ENCODE measurements at regions of chr17 and their contacts with region 1.

Region 1: GRCh38 chr17:38898812-38899348 is 26.5 kb upstream of the LASP1NB start:
- DNase-seq: no peak
- H3K4me3 ChIP-seq: no peak overlapping the region
- H3K27ac ChIP-seq: no peak overlapping the region
- H3K4me1 ChIP-seq: peaks cover 26% of the 10 kb centered on the region
- H3K27me3 ChIP-seq: no peaks in the 10 kb centered on the region
- CTCF ChIP-seq: no peak

Region 2: DNA sequence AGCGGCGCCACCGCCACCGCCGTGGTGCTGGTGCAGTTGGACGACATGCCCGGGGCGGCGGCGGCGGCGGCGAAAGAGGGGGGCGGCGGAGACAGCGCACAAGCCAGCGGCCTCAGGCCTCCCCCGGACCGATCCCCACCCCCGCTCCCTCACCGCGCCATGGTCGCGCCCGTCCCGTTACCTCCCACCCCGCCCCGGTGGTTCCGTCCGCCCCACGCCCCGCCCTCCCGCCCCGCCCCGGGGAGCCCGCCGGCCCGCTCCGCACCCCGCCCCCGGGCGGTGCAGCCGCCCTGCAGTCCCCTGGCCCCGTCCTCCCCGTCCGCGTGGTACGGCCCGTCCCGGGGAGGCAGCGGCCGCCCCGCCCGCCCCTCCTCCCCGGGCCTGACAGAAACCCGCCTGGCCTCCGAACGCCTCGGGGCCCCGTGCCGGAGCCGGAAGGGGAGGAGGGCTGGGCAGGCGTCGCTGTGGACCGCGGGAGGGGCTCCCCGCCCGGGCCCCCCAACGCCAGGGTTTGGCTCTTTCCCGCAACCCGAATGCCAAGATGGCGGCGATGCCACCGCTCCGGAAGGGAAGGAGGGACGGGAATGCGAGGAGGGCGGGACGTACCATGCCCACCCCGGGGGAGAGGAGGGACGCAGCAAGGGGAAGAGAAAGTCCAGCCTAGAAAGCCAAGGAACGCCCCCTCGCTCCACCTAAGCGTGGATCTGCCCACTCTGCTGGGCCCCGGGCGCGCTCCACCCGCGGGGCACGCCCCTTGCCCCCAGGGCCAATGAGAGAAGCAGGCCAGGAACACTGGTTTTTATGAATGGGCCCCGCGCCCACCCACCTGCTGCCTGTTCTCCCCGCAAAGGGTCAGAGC is 99.3 kb before region 1 on chr17 and contains the start of gene PIP4K2B:
- CTCF ChIA-PET with region 1: no interaction called
- dilution Hi-C with region 1: loop called (anchors 5 kb)
- in situ Hi-C with region 1: no loop called
- intact Hi-C with region 1: no loop called
- DNase-seq: peak; percentile 95
- H3K4me3 ChIP-seq: peak within 1 kb of the TSS; percentile 73 to 95 (median 86)
- H3K27ac ChIP-seq: peak within 1 kb of the TSS; percentile 85
- H3K4me1 ChIP-seq: peaks cover 17% of the 10 kb centered on the region
- H3K27me3 ChIP-seq: no peaks in the 10 kb centered on the region
- CTCF ChIP-seq: no peak
- total RNA-seq, gene PIP4K2B: 34.6 to 55.7 TPM

Region 3: GRCh38 chr17:38853292-38854219 is 45.3 kb before region 1 on chr17 and contains the start of gene RPL23:
- CTCF ChIA-PET with region 1: no interaction called
- dilution Hi-C with region 1: no loop called
- in situ Hi-C with region 1: no loop called
- intact Hi-C with region 1: loop called (anchors 2 kb)
- DNase-seq: peak; percentile 94
- H3K4me3 ChIP-seq: peak within 1 kb of the TSS; percentile 59 to 98 (median 86)
- H3K27ac ChIP-seq: peak within 1 kb of the TSS; percentile 92
- H3K4me1 ChIP-seq: peaks cover 10% of the 10 kb centered on the region
- H3K27me3 ChIP-seq: no peaks in the 10 kb centered on the region
- CTCF ChIP-seq: no peak
- total RNA-seq, gene RPL23: 693 to 1,265 TPM

Region 4: DNA sequence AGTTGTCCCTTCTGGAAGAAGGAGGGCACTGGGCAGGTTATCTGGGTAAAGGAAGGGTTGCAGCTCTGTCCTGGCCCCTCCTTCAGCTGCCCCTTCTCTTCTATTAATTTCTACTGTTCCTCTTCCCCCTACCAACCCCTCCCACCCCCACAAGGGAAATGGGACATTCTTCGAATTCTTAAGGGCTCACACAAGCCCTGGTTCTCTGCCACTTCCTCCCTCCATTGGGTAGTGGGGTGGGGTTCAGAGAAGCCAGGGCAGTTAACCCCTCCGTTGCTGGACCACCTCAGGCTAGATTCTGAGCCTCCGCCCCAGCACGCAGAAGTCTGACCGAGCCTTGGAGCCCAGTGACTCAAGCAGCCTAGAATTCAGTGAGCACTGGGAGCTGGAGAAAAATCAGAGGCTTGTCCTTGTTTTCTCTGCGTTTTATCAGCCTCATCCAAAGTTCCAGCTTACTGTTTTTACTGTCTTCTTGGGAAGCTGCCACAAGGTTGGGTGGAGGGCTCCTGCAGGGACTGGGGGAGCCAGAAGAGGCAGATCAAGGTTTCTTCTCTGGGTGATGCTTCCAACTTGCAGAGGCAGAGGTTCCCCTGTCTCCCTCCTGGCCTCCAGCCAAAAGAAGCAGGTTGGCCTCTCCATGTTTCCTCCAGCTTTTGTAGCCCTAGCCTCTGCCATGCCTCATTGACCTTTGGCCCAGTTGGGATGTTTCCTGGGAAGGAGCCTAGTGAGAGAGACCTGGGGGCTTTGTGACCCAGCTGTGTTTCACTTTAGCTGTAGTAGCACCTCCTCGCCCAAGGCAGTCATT is 18.8 kb before region 1 on chr17:
- CTCF ChIA-PET with region 1: no interaction called
- dilution Hi-C with region 1: no loop called
- in situ Hi-C with region 1: no loop called
- intact Hi-C with region 1: loop called (anchors 2 kb)
- DNase-seq: peak; percentile 77
- H3K4me3 ChIP-seq: peak overlapping the region in 1 of 3 experiments; percentile 13
- H3K27ac ChIP-seq: peak overlapping the region; percentile 25
- H3K4me1 ChIP-seq: peaks cover 76% of the 10 kb centered on the region
- H3K27me3 ChIP-seq: no peaks in the 10 kb centered on the region
- CTCF ChIP-seq: no peak

Region 5: GRCh38 chr17:38939987-38940386 is 41.1 kb after region 1 on chr17:
- CTCF ChIA-PET with region 1: no interaction called
- dilution Hi-C with region 1: loop called (anchors 5 kb)
- in situ Hi-C with region 1: no loop called
- intact Hi-C with region 1: no loop called
- DNase-seq: no peak
- H3K4me3 ChIP-seq: no peak overlapping the region
- H3K27ac ChIP-seq: no peak overlapping the region
- H3K4me1 ChIP-seq: no peaks in the 10 kb centered on the region
- H3K27me3 ChIP-seq: peaks cover 5% of the 10 kb centered on the region
- CTCF ChIP-seq: no peak

Region 6: GRCh38 chr17:38970128-38970527 is 71.2 kb after region 1 on chr17:
- CTCF ChIA-PET with region 1: no interaction called
- dilution Hi-C with region 1: loop called (anchors 5 kb)
- in situ Hi-C with region 1: no loop called
- intact Hi-C with region 1: no loop called
- DNase-seq: no peak
- H3K4me3 ChIP-seq: no peak overlapping the region
- H3K27ac ChIP-seq: no peak overlapping the region
- H3K4me1 ChIP-seq: no peaks in the 10 kb centered on the region
- H3K27me3 ChIP-seq: no peaks in the 10 kb centered on the region
- CTCF ChIP-seq: peak in 1 of 2 donors; percentile 20

Measured in mammary epithelial cell (primary cell).